ENCODE measurements at regions of chr6 and their contacts with region 1.

Region 1: DNA sequence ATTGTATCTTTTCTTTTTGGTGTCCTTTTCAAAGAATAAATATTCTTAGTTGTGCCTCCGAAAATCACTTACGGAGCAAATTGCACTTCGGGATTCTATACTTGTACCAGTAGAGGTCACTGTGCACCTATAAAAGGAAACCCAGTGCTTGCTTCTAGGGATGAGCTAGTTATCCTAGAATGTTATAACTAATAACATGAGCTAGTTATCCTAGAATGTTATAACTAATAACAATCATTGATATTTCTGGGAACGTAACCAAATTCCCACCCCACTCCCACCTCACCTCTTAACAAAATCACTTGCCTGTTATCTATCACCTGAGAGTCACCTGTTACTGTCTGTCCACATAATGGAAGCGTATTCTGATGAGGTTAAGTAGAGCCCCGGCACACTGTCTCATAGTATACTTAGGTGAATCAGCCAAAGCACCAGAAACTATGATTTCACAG is 126.9 kb upstream of the TIAM2 start:
- DNase-seq: peak; percentile 66
- ATAC-seq: no peak
- H3K4me3 ChIP-seq: no peak overlapping the region
- H3K27ac ChIP-seq: no peak overlapping the region
- H3K4me1 ChIP-seq: peaks cover 9% of the 10 kb centered on the region; the same call in 1 of the 2 replicates
- H3K27me3 ChIP-seq: no peaks in the 10 kb centered on the region
- CTCF ChIP-seq: peak; percentile 78

Region 2: GRCh38 chr6:153957394-153957793 is 910.8 kb before region 1 on chr6:
- CTCF ChIA-PET with region 1: no interaction called
- POLR2A ChIA-PET with region 1: no interaction called
- intact Hi-C with region 1: no loop called
- DNase-seq: no peak
- ATAC-seq: no peak
- H3K4me3 ChIP-seq: no peak overlapping the region
- H3K27ac ChIP-seq: no peak overlapping the region
- H3K4me1 ChIP-seq: no peaks in the 10 kb centered on the region
- H3K27me3 ChIP-seq: peaks cover 6% of the 10 kb centered on the region; the same call in 1 of the 2 replicates
- CTCF ChIP-seq: no peak

Region 3: DNA sequence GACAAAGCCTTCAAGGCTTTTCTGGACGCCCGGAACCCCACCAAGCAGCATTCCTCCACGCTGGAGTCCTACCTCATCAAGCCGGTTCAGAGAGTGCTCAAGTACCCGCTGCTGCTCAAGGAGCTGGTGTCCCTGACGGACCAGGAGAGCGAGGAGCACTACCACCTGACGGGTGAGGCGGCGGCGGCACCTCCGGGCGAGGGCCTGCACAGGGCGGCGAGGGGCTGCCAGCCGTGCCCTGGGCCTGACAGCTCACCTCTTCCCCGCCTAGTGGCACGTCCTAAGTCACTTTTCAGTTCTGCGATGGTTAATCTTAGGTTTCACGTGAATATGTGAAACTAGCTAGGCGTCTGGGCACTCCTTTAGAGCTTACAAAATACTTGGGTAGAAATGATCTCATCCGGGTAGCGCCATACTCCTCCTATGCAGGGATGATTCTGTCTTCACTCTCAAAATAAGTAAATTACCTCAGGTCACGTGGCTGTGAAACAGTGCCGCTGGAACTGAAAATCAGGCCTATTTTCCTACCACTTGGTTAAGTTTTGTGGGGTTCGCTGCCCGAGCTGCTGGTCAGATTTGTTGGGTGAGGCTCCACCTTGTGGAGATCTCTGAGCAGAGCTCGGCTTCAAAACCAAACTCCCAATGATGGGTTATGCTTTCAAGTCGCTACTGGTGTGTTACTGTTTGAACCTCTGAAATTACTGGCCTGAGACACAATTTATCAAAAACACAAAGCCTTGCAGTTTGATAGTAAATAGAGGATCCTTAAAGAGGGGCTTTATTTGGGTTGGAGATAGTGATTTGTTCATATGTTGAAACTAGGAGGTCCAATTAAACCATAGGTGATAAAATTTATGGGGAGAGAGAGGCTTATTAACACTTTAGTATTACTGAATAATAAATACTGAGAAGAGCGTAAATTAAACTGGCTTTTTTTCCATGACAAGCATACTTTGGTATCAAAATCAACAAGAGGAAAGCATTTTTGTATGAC is 380.1 kb after region 1 on chr6:
- CTCF ChIA-PET with region 1: interaction called, 5 read pairs
- POLR2A ChIA-PET with region 1: no interaction called
- intact Hi-C with region 1: loop called (anchors 5 kb)
- DNase-seq: peak; percentile 32
- ATAC-seq: peak; percentile 35; the same call in 1 of the 2 replicates
- H3K4me3 ChIP-seq: no peak overlapping the region
- H3K27ac ChIP-seq: no peak overlapping the region
- H3K4me1 ChIP-seq: peaks cover 1% of the 10 kb centered on the region
- H3K27me3 ChIP-seq: no peaks in the 10 kb centered on the region
- CTCF ChIP-seq: peak; percentile 75